ENCODE measurements at regions of chr16 and their contacts with region 1.

Region 1: GRCh38 chr16:69565671-69566239 is at the start of gene NFAT5:
- DNase-seq: peak; percentile 74 to 77
- ATAC-seq: peak; percentile 79 to 82
- H3K4me3 ChIP-seq: peak within 1 kb of the TSS; percentile 75 to 99 (median 94)
- H3K27ac ChIP-seq: peak within 1 kb of the TSS; percentile 98 to 100 (median 100)
- H3K4me1 ChIP-seq: peaks cover 38 to 43% of the 10 kb centered on the region in 2 donors
- H3K27me3 ChIP-seq: no peaks in the 10 kb centered on the region
- CTCF ChIP-seq: peak in 1 of 5 experiments; percentile 11
- POLR2A ChIP-seq: peak; percentile 95 to 96
- total RNA-seq, gene NFAT5: 14.4 to 34.2 (median 18.4) TPM

Region 2: GRCh38 chr16:69132424-69133252 is 433.1 kb before region 1 on chr16 and contains the starts of genes CHTF8 and UTP4:
- in situ Hi-C with region 1: no loop called
- intact Hi-C with region 1: loop called (anchors 1 kb)
- DNase-seq: peak; percentile 72 to 82
- ATAC-seq: peak; percentile 95 to 97
- H3K4me3 ChIP-seq: peak within 1 kb of the TSS; percentile 79 to 97 (median 86)
- H3K27ac ChIP-seq: peak within 1 kb of the TSS; percentile 86 to 94 (median 92)
- H3K4me1 ChIP-seq: peaks cover 26 to 29% of the 10 kb centered on the region in 2 donors
- H3K27me3 ChIP-seq: no peaks in the 10 kb centered on the region
- CTCF ChIP-seq: no peak
- POLR2A ChIP-seq: peak; percentile 97 to 98
- total RNA-seq, gene CHTF8: 27.3 to 52.3 (median 34.8) TPM
- total RNA-seq, gene UTP4: 33.1 to 44.2 (median 35.5) TPM

Region 3: GRCh38 chr16:69386596-69386995 is 179.2 kb before region 1 on chr16:
- in situ Hi-C with region 1: loop called in 1 of 4 experiments (anchors 10 kb)
- intact Hi-C with region 1: loop called (anchors 2 kb)
- DNase-seq: no peak
- ATAC-seq: no peak
- H3K4me3 ChIP-seq: peak overlapping the region in 1 of 4 donors; percentile 82
- H3K27ac ChIP-seq: peak overlapping the region; percentile 84 to 95 (median 86)
- H3K4me1 ChIP-seq: peaks cover 8 to 12% of the 10 kb centered on the region in 2 donors
- H3K27me3 ChIP-seq: no peaks in the 10 kb centered on the region
- CTCF ChIP-seq: no peak
- POLR2A ChIP-seq: no peak

Region 4: GRCh38 chr16:69424053-69424934 is 141.5 kb before region 1 on chr16 and contains the start of gene CYB5B:
- in situ Hi-C with region 1: no loop called
- intact Hi-C with region 1: loop called (anchors 1 kb)
- DNase-seq: peak; percentile 93 to 96
- ATAC-seq: peak; percentile 100
- H3K4me3 ChIP-seq: peak within 1 kb of the TSS; percentile 70 to 90 (median 79)
- H3K27ac ChIP-seq: peak within 1 kb of the TSS; percentile 76 to 88 (median 80)
- H3K4me1 ChIP-seq: peaks cover 10 to 12% of the 10 kb centered on the region in 2 donors
- H3K27me3 ChIP-seq: no peaks in the 10 kb centered on the region
- CTCF ChIP-seq: peak in 1 of 5 experiments; percentile 19
- POLR2A ChIP-seq: peak; percentile 62 to 64
- total RNA-seq, gene CYB5B: 18.5 to 50.1 (median 26.3) TPM

Region 5: GRCh38 chr16:69613378-69614154 is 47.8 kb after region 1 on chr16:
- in situ Hi-C with region 1: no loop called
- intact Hi-C with region 1: loop called (anchors 1 kb)
- DNase-seq: peak; percentile 42 to 46
- ATAC-seq: peak; percentile 89 to 97
- H3K4me3 ChIP-seq: peak overlapping the region in 1 of 4 donors; percentile 7
- H3K27ac ChIP-seq: peak overlapping the region; percentile 82 to 91 (median 85)
- H3K4me1 ChIP-seq: peaks cover 66 to 85% of the 10 kb centered on the region in 2 donors
- H3K27me3 ChIP-seq: no peaks in the 10 kb centered on the region
- CTCF ChIP-seq: no peak
- POLR2A ChIP-seq: no peak